Left ventricle myocardium inferior (tissue), 1 donor: ENCODE measurements at regions of chr7 and their contacts with region 1.

Region 1: GRCh38 chr7:47179812-47180515 is 401.9 kb downstream of the TNS3 start:
- DNase-seq: peak; percentile 38
- H3K4me3 ChIP-seq: no peak overlapping the region
- H3K27ac ChIP-seq: no peak overlapping the region
- H3K4me1 ChIP-seq: peaks cover 49% of the 10 kb centered on the region
- H3K27me3 ChIP-seq: no peaks in the 10 kb centered on the region
- CTCF ChIP-seq: peak; percentile 87

Region 2: DNA sequence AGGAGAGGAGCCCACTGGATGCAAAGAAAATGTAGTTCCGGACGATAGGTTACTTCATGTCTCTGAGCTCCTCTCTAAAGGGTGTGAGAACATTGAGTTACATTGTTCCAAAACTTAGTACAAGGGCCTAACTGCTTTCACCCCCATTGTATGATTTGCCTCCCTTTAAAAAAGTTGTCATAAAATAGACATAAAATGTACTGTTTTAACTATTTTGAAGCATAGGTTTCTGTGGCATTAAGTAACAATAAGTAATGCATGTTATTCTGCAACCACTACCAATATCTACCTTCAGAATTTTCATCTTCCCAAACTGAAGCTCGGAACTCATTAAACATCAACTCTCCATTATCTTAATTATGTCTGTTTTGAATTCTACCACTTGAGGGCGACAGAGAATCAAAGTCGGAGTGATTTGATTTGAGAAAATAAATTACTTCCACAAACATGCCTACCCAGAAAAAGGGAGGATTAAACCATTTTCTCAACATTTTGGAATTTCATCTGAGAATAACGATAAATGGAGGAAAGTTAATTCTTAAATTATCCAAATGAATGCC is 1289.0 kb before region 1 on chr7:
- intact Hi-C with region 1: loop called (anchors 1 kb)
- DNase-seq: no peak
- H3K4me3 ChIP-seq: no peak overlapping the region
- H3K27ac ChIP-seq: no peak overlapping the region
- H3K4me1 ChIP-seq: peaks cover 10% of the 10 kb centered on the region
- H3K27me3 ChIP-seq: peaks cover 77% of the 10 kb centered on the region
- CTCF ChIP-seq: peak; percentile 75